ENCODE measurements at regions of chr7 and their contacts with region 1.

Region 1: DNA sequence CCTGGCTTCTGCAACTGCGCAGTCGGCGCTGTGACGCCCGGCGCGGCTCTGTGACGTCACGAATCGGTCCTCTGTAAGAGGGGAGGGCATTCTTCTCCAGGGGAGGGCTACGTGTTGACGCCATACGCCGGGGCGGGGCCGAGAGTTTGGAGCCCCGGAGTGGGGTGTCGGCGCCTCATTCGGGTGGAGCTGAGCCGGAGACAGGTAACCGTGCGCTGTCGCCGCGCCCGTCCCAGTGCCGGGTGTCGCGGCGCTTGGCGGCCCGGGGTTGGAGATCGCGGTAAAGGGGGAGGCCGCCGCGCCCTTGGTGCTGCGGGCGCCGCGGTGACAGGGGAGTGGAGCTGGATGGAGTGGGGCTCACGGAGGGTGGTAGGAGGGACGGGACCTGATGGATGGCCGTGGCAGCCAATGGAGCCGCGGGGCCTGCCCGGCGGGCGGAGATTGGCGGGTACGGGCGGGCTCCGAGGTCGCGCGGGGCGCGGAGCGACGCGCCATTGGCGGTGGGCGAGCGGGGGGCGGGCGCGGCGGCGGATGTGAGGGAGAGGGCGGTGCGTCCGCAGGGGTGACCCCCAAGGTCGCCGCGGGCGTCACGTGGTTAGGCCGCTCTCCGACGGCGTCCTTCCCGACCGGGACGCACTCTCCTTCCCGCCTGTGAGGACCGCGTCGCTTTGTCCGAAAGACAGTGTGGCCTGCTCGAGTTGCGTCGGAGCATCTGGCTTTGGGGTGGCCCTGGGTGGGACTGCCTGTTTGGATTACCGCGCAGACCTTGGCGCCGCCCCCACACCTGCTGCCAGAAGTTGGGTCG is at the start of gene OGDH:
- DNase-seq: peak; percentile 96
- ATAC-seq: peak; percentile 99
- H3K4me3 ChIP-seq: peak within 1 kb of the TSS; percentile 68 to 76
- H3K27ac ChIP-seq: peak within 1 kb of the TSS; percentile 88
- H3K4me1 ChIP-seq: peaks cover 17 to 32% of the 10 kb centered on the region in 2 experiments
- H3K27me3 ChIP-seq: no peaks in the 10 kb centered on the region
- CTCF ChIP-seq: no peak
- POLR2A ChIP-seq: peak; percentile 31
- RAD21 ChIP-seq: no peak; the same call in 1 of the 2 replicates
- total RNA-seq, gene OGDH: 69.1 TPM

Region 2: DNA sequence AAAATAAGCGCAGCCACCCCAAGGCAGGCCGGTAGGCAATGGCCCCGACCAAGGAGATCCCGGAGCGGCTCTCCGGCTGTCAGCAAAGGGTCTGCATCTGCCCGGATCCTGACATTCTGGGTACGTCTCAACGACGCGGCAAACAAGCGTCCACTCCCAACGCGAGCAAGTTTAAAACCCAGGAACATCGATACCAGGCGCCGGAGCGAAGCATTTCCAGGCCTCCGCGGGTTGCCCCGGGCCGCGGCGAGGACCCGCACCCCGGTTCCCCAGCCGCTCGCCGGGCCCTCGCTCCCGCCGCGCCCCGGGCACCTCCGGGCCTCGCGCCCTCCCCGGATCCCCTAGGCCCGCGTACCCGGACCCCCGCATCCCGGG is 700.7 kb before region 1 on chr7:
- CTCF ChIA-PET with region 1: no interaction called
- POLR2A ChIA-PET with region 1: no interaction called
- RAD21 ChIA-PET with region 1: no interaction called
- intact Hi-C with region 1: no loop called
- DNase-seq: no peak
- ATAC-seq: peak; percentile 42
- H3K4me3 ChIP-seq: peak overlapping the region; percentile 75 to 80
- H3K27ac ChIP-seq: peak overlapping the region; percentile 76
- H3K4me1 ChIP-seq: peaks cover 13 to 24% of the 10 kb centered on the region in 2 experiments
- H3K27me3 ChIP-seq: no peaks in the 10 kb centered on the region
- CTCF ChIP-seq: no peak
- POLR2A ChIP-seq: no peak
- RAD21 ChIP-seq: no peak

Region 3: DNA sequence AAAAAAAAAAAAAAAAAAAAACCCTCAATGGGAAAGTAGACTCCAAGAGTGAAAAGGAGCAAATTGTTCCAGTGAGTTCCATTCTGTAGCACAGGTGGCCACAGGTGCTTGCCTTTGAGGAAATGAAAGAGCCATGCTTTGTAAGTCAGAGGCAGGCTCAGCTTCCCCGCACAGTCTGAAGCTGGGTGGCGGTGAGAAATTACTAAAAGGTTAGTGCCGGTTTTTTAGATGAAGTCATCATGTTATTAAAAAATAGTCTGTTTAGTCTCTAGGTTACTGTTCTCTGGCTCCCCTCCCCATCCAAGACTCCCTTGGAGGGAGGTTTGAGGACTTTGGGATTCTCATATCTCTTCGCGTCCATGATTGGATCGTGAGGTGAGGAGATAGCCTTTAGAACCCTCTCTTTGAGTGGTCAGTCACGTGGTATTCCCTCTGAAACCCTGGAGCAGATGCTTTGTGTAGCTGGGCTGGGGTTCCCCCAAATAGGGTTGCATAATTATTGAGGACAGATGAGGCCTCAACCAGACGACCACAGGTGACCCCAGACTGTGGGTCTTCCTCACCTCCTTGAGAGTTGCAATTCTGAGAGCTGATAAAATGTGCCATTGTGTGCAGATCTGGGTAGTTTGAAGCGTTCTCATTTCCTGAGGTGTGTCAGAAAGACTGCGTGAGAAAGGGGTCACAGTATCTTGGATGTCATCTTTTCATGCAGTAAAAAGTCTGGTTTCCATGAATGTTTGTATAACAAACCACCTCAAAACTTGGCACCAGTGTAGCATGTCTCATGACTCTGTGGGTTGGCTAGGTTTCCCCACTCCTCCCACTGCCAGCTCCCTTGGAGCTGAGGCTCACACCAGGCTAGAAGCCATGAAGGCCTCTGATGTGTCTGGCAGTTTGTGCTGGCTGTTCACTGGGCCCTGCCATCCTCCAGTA is 26.9 kb after region 1 on chr7:
- CTCF ChIA-PET with region 1: no interaction called
- POLR2A ChIA-PET with region 1: interaction called, 14 read pairs
- RAD21 ChIA-PET with region 1: no interaction called
- intact Hi-C with region 1: no loop called
- DNase-seq: no peak
- ATAC-seq: no peak
- H3K4me3 ChIP-seq: no peak overlapping the region
- H3K27ac ChIP-seq: no peak overlapping the region
- H3K4me1 ChIP-seq: peaks cover 23 to 52% of the 10 kb centered on the region in 2 experiments
- H3K27me3 ChIP-seq: no peaks in the 10 kb centered on the region
- CTCF ChIP-seq: no peak
- POLR2A ChIP-seq: no peak
- RAD21 ChIP-seq: no peak

Region 4: DNA sequence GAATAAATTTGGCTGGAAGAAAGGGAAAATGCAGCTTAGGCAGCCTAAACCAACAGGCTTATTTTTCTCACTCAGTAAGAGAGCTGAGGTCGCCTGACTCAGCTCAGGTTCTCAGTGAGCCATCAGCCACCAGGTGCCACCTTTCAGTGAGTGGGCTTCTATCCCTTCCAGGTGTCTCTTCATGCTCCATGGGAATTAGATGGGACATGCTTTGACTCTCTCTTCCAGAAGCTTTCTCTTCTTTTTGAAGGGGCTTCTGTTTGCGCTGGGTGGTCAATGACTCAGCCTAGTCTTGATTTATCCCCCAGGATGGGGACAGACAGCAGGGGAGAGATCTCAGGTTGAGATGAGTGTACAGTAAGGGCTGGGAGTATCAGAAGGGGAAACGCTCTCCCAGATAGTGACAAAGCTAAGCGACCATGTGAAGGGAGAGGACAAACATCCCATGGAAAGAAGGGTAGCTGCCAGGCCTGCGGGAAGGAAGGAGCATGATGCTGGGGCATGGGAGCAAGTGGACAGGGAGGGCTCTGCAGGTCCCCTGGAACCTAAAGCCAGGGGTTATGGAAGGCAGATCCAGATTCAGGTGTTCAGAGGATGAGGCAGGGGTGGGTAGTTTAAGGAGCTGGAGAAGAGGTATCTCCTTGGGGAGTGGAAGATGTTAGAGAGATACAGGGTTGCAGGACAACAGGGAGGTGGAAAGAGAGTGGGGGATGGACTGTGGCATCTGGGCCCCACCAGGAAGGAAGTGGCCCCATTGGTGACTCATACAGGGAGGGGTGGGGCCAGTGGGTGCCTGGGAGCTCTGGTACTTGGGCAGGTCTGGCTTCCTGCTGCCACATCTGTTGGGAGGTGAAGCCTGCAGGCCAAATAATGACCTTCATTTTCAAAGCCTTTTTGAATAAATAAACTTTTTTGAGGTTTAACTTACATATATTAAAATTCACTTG is 32.2 kb after region 1 on chr7:
- CTCF ChIA-PET with region 1: no interaction called
- POLR2A ChIA-PET with region 1: interaction called, 14 read pairs
- RAD21 ChIA-PET with region 1: no interaction called
- intact Hi-C with region 1: no loop called
- DNase-seq: peak; percentile 74
- ATAC-seq: peak; percentile 84
- H3K4me3 ChIP-seq: peak overlapping the region; percentile 25 to 40
- H3K27ac ChIP-seq: peak overlapping the region; percentile 98
- H3K4me1 ChIP-seq: peaks cover 43 to 68% of the 10 kb centered on the region in 2 experiments
- H3K27me3 ChIP-seq: no peaks in the 10 kb centered on the region
- CTCF ChIP-seq: no peak
- POLR2A ChIP-seq: peak; percentile 71
- RAD21 ChIP-seq: peak; percentile 35

Region 5: GRCh38 chr7:44748045-44748947 is 141.6 kb after region 1 on chr7 and contains the start of gene ZMIZ2:
- CTCF ChIA-PET with region 1: no interaction called
- POLR2A ChIA-PET with region 1: interaction called, 3 read pairs
- RAD21 ChIA-PET with region 1: no interaction called
- intact Hi-C with region 1: loop called (anchors 5 kb)
- DNase-seq: peak; percentile 48
- ATAC-seq: peak; percentile 87
- H3K4me3 ChIP-seq: peak within 1 kb of the TSS; percentile 83 to 89
- H3K27ac ChIP-seq: peak within 1 kb of the TSS; percentile 92
- H3K4me1 ChIP-seq: peaks cover 18 to 28% of the 10 kb centered on the region in 2 experiments
- H3K27me3 ChIP-seq: no peaks in the 10 kb centered on the region
- CTCF ChIP-seq: no peak
- POLR2A ChIP-seq: no peak
- RAD21 ChIP-seq: no peak; the same call in 1 of the 2 replicates
- total RNA-seq, gene ZMIZ2: 91.3 TPM

Region 6: GRCh38 chr7:44761207-44762161 is 154.8 kb after region 1 on chr7:
- CTCF ChIA-PET with region 1: no interaction called
- POLR2A ChIA-PET with region 1: no interaction called
- RAD21 ChIA-PET with region 1: no interaction called
- intact Hi-C with region 1: no loop called
- DNase-seq: peak; percentile 67
- ATAC-seq: peak; percentile 97
- H3K4me3 ChIP-seq: peak overlapping the region; percentile 46 to 63
- H3K27ac ChIP-seq: peak overlapping the region; percentile 74
- H3K4me1 ChIP-seq: peaks cover 12 to 22% of the 10 kb centered on the region in 2 experiments
- H3K27me3 ChIP-seq: no peaks in the 10 kb centered on the region
- CTCF ChIP-seq: no peak
- POLR2A ChIP-seq: peak; percentile 58
- RAD21 ChIP-seq: peak; percentile 40; the same call in 1 of the 2 replicates